SK-N-SH (cell line): ENCODE measurements at regions of chr19 and their contacts with region 1.

Region 1: GRCh38 chr19:37906869-37907734 is at the start of gene SIPA1L3:
- DNase-seq: peak; percentile 94
- H3K4me3 ChIP-seq: peak within 1 kb of the TSS; percentile 77 to 97
- H3K27ac ChIP-seq: peak within 1 kb of the TSS; percentile 78 to 94
- H3K4me1 ChIP-seq: peaks cover 4 to 16% of the 10 kb centered on the region in 2 experiments; a peak in 1 of 4 replicates
- H3K27me3 ChIP-seq: no peaks in the 10 kb centered on the region
- CTCF ChIP-seq: no peak
- EP300 ChIP-seq: no peak
- RAD21 ChIP-seq: no peak
- polyA plus RNA-seq, gene SIPA1L3: 6.7 and 11.6 TPM in 2 replicates

Region 2: GRCh38 chr19:37928527-37929286 is 21.6 kb after region 1 on chr19:
- CTCF ChIA-PET with region 1: interaction called, 10 read pairs
- POLR2A ChIA-PET with region 1: interaction called, 4 read pairs
- DNase-seq: no peak
- H3K4me3 ChIP-seq: no peak overlapping the region
- H3K27ac ChIP-seq: no peak overlapping the region
- H3K4me1 ChIP-seq: peaks cover 4 to 11% of the 10 kb centered on the region in 2 experiments; a peak in 2 of 4 replicates
- H3K27me3 ChIP-seq: no peaks in the 10 kb centered on the region
- CTCF ChIP-seq: no peak
- EP300 ChIP-seq: no peak
- RAD21 ChIP-seq: no peak

Region 3: GRCh38 chr19:38073841-38074685 is 167.0 kb after region 1 on chr19:
- CTCF ChIA-PET with region 1: interaction called, 38 read pairs
- POLR2A ChIA-PET with region 1: no interaction called
- DNase-seq: peak; percentile 69
- H3K4me3 ChIP-seq: no peak overlapping the region
- H3K27ac ChIP-seq: peak overlapping the region in 1 of 2 experiments; percentile 37; a peak in 2 of 4 replicates
- H3K4me1 ChIP-seq: peaks cover 0 to 7% of the 10 kb centered on the region in 2 experiments; a peak in 1 of 4 replicates
- H3K27me3 ChIP-seq: no peaks in the 10 kb centered on the region
- CTCF ChIP-seq: no peak
- EP300 ChIP-seq: no peak
- RAD21 ChIP-seq: peak; percentile 42

Region 4: DNA sequence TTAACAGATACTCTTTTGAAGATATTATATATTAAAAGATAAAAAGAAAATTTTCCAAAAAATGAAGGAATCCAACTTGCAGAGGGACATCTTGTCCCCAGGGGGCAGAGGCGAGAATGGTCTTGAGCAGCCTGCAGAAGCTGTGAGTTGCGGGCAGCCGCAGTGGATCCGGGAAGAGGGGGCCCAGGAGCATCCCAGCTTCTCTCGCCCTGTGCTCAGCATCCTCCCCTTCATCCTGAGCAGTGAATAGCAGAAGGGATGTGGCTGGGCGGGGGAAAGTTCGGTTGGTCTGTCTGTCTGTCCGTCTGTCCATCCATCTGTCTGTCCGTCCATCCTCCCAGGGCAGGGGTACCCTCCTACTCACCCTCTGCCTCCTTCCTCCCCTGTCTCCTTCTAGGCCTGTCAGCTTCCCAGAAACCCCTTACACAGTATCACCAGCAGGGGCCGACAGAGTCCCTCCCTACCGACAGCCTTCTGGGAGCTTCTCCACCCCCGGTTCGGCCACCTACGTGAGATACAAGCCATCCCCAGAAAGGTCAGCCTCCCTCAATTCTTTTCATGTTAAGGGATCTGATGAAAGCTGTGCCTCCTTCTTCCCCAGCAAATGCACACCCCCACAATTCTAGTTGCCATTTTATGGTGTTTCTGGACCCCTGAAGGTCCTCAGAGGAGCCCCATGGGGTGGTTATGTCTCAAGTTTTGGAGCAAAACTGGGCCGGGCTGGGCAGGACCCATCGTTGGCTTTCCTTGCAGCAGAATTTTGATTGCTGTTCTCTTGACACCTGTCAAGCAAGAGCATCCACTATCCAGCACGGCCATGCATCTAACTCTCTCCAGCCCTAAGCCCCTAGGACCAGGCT is 235.3 kb after region 1 on chr19:
- CTCF ChIA-PET with region 1: interaction called, 67 read pairs
- POLR2A ChIA-PET with region 1: no interaction called
- DNase-seq: peak; percentile 87
- H3K4me3 ChIP-seq: no peak overlapping the region
- H3K27ac ChIP-seq: no peak overlapping the region
- H3K4me1 ChIP-seq: no peaks in the 10 kb centered on the region
- H3K27me3 ChIP-seq: no peaks in the 10 kb centered on the region
- CTCF ChIP-seq: peak; percentile 71
- EP300 ChIP-seq: no peak
- RAD21 ChIP-seq: peak; percentile 88

Region 5: DNA sequence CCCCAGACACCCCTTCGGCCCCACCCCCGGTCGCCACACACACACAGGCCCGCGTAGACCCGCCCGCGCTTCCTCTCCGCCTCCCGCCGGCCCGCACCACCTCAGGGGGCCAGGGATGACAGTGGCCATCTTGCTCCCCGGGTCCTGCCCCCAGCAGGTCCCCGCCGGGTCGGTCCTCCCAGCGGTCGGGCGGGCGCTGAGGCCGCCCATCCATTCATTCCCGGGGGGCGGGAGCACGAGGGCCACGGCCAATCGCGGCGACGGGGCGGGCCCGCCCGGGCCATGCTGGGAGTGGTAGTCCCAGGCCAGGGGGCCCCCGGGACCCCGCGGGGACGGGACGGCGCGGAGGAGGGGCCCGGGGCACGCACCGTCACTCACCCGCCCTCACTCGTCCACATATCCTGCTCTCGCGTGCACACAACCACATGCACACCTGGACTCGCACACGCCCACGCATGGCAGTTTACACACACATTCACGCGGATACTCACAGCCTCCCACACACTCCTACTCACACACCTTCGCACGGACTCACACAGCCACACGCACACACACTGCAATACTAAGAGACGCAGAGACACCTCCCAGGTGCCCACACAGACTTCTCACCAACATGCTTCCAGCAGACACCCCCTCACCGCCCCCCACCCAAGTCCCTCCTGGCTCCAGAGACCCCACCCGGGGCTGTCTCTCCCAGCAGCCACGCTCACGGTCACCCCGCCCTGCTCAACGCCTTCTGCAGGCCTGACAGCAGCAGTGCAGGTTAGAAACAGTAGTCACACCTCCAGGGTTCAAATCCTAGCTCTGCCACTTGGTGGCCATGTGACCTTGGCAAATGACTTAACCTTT is 317.1 kb after region 1 on chr19 and contains the start of gene DPF1:
- CTCF ChIA-PET with region 1: interaction called, 17 read pairs
- POLR2A ChIA-PET with region 1: no interaction called
- DNase-seq: peak; percentile 99
- H3K4me3 ChIP-seq: peak within 1 kb of the TSS; percentile 53 to 65
- H3K27ac ChIP-seq: peak within 1 kb of the TSS in 1 of 2 experiments; percentile 31; a peak in 1 of 4 replicates
- H3K4me1 ChIP-seq: peaks cover 0 to 9% of the 10 kb centered on the region in 2 experiments; a peak in 1 of 4 replicates
- H3K27me3 ChIP-seq: no peaks in the 10 kb centered on the region
- CTCF ChIP-seq: peak; percentile 28
- EP300 ChIP-seq: no peak
- RAD21 ChIP-seq: 0 out of 2 replicates have a peak, but pooled peaks have one; percentile 11
- polyA plus RNA-seq, gene DPF1: 4.3 and 4.8 TPM in 2 replicates

Region 6: DNA sequence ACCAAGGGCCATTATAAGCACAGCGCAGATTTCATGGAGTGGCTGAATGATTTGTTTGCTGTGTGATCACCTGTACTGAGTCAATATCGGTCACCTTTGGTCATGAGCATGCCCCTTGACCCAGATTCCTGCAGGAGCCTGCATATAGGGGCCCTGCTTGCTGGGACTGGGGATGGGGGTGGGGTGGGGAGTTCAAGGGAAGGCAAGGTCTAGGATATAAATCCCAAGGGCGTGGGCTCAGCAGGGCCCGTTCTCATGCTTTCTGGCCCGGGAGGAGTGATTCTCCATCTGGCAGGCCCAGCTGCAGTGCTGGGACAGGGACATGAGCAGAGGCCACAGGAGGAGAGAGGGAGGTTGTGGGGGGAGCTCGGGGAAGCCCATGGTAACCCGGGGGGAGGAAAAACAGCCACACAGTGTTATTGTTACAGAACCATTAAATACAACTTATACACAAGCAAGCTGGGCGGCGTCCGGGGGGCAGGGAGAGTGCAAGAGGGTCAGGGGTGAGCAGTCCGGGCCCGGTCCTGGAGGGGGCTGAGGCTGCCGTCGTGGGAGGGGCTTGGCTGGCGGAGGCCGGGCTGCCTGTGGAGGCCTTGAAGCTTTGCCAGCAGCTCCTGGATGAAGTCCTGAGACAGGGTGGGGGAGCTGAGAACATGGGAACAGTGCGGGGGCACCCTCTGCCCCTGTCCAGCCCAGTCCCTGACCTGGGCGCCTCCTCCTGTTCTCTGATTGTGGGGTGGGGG is 343.9 kb after region 1 on chr19:
- CTCF ChIA-PET with region 1: interaction called, 13 read pairs
- POLR2A ChIA-PET with region 1: no interaction called
- DNase-seq: no peak
- H3K4me3 ChIP-seq: no peak overlapping the region
- H3K27ac ChIP-seq: no peak overlapping the region
- H3K4me1 ChIP-seq: peaks cover 0 to 16% of the 10 kb centered on the region in 2 experiments; a peak in 2 of 4 replicates
- H3K27me3 ChIP-seq: no peaks in the 10 kb centered on the region; the same call in 1 of the 2 replicates
- CTCF ChIP-seq: no peak
- EP300 ChIP-seq: no peak
- RAD21 ChIP-seq: no peak